Heart left ventricle (tissue), 16 donors: ENCODE measurements at regions of chr1 and their contacts with region 1.

Region 1: DNA sequence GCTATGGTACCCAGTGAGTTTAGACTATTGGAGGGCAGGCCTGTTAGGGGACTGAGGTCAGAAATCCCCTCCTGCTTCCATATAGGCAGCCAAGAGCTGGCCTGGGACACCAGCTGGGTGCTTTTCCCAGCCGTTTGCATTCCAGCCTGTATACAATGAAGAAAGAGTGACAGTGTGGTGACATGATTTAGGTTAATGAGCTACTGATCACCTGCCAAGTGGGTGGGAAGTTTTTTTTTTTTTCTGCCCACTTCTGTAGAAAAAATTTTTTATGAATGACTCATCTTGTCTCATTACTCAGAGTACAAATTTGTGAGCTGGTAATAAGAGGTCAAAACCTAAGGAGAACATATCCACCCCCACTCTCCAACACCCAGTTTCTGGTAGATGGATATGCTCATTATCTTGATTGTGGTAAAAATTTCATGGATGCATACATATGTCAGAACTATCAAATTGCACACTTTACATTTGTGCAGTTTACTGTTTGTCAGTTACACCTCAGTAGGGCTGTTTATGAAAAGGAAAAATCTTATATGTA is 16.4 kb upstream of the CGN start:
- DNase-seq: no peak
- ATAC-seq: peak in 1 of 4 donors; percentile 29
- H3K4me3 ChIP-seq: no peak overlapping the region
- H3K27ac ChIP-seq: no peak overlapping the region
- H3K4me1 ChIP-seq: no peaks in the 10 kb centered on the region
- H3K27me3 ChIP-seq: no peaks in the 10 kb centered on the region
- CTCF ChIP-seq: no peak
- POLR2A ChIP-seq: no peak

Region 2: DNA sequence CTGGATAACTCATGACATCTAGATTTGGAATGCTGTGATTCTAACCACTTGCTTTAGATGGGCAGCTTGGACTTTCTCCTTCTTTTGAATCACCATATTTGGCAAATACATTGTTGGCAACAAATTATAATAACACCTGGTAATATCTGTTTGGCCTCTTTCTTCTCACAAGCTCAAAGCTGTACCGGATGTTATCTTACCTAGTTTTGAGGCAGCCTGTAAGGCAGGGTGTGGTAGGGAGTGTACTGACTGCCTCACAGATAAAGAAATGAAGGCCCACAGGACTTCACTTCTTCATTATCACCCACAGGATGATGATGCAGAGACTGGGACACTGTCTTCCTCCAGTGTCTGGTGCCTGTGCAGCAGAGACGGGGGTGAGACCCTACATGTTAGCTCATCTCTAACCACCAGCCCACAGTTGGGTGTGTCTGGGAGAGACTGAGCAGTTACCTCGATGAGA is 73.8 kb after region 1 on chr1:
- intact Hi-C with region 1: loop called in 1 of 10 experiments (anchors 10 kb)
- DNase-seq: no peak
- ATAC-seq: no peak
- H3K4me3 ChIP-seq: no peak overlapping the region
- H3K27ac ChIP-seq: no peak overlapping the region
- H3K4me1 ChIP-seq: no peaks in the 10 kb centered on the region
- H3K27me3 ChIP-seq: no peaks in the 10 kb centered on the region
- CTCF ChIP-seq: no peak
- POLR2A ChIP-seq: no peak

Region 3: GRCh38 chr1:151639466-151639865 is 144.7 kb after region 1 on chr1:
- intact Hi-C with region 1: no loop called
- DNase-seq: no peak
- ATAC-seq: no peak
- H3K4me3 ChIP-seq: no peak overlapping the region
- H3K27ac ChIP-seq: no peak overlapping the region
- H3K4me1 ChIP-seq: peaks cover 0 to 33% (median 14%) of the 10 kb centered on the region in 12 donors
- H3K27me3 ChIP-seq: no peaks in the 10 kb centered on the region
- CTCF ChIP-seq: no peak
- POLR2A ChIP-seq: no peak